PC-3 (cell line): ENCODE measurements at regions of chr2 and their contacts with region 1.

Region 1: DNA sequence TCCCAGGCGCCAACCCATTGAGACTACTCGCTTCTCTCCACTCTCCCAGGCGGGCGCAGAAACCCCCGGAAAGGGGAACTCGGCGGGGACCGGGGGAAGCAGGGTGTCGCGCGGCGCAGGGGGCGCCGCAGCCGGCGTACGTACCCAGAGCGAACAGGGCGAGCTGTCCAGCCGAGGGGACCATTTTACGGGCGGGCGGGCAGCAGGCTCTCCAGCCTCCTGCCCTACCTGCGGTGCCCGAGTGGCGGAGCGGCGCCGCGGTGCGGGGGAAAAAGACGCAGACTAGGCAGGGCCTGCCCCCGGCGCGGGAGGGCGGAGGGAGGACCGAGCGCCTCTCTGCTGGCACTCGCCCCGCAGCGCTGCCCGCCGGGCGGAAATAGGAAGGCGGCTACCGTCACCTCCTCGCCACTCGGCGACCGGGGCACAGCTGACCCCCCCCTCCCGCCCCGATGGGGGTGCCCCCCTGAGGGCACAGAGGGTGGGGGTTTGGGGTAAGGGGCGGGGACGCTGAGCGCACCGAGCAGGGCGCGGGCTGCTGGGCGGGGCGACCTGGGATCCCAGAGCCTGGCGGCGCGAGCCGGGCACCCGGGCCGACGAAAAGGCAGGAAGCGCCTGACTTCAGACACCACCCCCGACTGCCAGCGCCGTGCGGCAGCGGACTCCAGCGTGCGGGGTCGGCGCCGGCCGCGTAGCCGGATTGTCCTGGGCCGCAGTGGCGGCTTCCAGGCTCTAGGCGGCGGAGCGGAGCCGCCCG is at the start of gene TGFA:
- DNase-seq: peak; percentile 95
- ATAC-seq: peak; percentile 79
- H3K4me3 ChIP-seq: peak within 1 kb of the TSS; percentile 96
- H3K27ac ChIP-seq: peak within 1 kb of the TSS; percentile 87
- H3K4me1 ChIP-seq: peaks cover 39% of the 10 kb centered on the region
- H3K27me3 ChIP-seq: no peaks in the 10 kb centered on the region
- CTCF ChIP-seq: peak; percentile 78
- total RNA-seq, gene TGFA: 45.0 and 54.7 TPM in 2 replicates

Region 2: DNA sequence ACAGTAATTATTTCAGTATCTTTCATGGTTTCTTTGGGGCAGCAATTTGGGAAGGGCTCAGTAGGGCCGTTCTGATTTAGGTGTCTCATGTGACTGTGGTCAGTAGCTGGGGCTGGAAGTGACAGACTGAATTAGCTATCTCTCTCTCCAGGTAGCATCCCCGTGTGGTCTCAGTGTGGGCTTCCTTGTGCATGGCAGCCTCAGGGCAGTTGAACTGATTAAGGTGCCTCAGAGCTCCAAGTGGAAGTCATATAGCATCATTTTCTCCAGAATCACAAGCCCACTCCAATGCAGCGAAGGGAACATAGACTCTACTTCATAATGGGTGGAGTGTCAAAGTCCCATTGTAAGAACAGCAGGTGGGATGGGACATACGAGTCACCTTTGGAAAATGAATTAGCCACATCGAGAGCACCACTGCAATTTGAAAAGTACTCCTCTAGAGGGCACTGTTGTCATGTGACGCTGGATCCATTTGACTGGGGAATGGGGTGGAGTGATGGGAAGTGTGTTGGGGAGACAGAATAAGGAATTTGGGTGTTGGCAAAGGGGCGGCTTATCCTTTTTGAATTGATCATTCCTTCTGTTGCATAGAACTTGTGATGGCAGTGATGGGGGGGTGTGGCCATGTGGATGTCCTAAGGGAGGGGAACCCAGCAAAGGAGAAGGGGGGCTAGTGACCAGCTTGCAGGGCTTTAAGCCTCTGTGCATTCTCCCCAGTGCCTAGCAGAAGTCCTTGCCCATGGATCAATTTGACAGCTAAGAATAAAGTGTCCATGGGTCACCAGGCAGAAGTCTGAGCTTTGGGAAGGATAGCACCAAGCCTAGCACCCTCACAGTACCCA is 212.6 kb before region 1 on chr2:
- CTCF ChIA-PET with region 1: no interaction called
- POLR2A ChIA-PET with region 1: no interaction called
- intact Hi-C with region 1: loop called (anchors 1 kb)
- DNase-seq: peak; percentile 88
- ATAC-seq: peak; percentile 75
- H3K4me3 ChIP-seq: no peak overlapping the region
- H3K27ac ChIP-seq: no peak overlapping the region
- H3K4me1 ChIP-seq: peaks cover 33% of the 10 kb centered on the region
- H3K27me3 ChIP-seq: no peaks in the 10 kb centered on the region
- CTCF ChIP-seq: peak; percentile 95

Region 3: DNA sequence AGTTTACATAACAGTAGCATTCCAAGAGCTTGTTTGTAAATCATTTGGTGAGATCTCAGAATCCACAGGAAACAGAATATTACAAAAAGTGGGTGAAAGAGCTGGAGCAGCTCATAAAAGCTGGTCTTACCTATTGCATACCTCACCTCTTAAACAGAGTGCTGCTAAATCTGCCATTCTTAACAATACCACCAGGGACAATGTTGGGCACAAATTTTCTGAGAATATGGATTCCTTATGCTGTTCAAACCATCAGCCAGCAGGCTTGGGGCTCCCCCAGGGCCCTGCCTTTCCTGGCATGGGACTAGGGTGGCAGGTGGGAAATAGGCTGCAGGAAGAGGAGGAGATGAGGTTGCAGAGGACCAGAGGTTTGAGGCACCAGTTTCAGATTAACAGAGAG is 55.7 kb before region 1 on chr2:
- CTCF ChIA-PET with region 1: no interaction called
- POLR2A ChIA-PET with region 1: no interaction called
- intact Hi-C with region 1: loop called (anchors 5 kb)
- DNase-seq: peak; percentile 82
- ATAC-seq: peak; percentile 90
- H3K4me3 ChIP-seq: no peak overlapping the region
- H3K27ac ChIP-seq: no peak overlapping the region
- H3K4me1 ChIP-seq: peaks cover 31% of the 10 kb centered on the region
- H3K27me3 ChIP-seq: no peaks in the 10 kb centered on the region
- CTCF ChIP-seq: peak; percentile 64

Region 4: DNA sequence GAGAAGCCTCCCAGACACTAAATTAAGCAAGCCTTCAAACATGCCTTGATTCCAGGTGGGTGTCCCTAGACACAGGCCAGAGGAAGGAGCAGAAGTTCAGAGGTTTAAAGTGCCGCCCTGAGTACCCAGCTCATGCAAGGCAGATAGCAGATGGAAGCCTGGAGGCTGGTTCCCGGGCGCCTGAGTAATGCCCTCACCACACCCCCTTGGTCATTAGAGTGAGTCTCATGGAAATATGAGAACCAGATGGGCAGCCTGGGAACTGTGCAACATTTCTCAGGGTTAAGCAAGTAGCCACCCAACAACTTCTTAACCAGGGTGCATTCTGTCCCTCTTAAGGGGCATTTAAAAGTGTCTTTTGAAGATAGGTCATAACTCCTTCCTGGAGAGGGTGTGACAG is 44.2 kb before region 1 on chr2:
- CTCF ChIA-PET with region 1: no interaction called
- POLR2A ChIA-PET with region 1: no interaction called
- intact Hi-C with region 1: no loop called
- DNase-seq: peak; percentile 66
- ATAC-seq: peak; percentile 37
- H3K4me3 ChIP-seq: peak overlapping the region; percentile 27; the same call in 1 of the 2 replicates
- H3K27ac ChIP-seq: peak overlapping the region; percentile 91
- H3K4me1 ChIP-seq: peaks cover 40% of the 10 kb centered on the region
- H3K27me3 ChIP-seq: no peaks in the 10 kb centered on the region
- CTCF ChIP-seq: no peak

Region 5: GRCh38 chr2:70523996-70524965 is 29.5 kb before region 1 on chr2:
- CTCF ChIA-PET with region 1: no interaction called
- POLR2A ChIA-PET with region 1: interaction called, 3 read pairs
- intact Hi-C with region 1: loop called (anchors 1 kb)
- DNase-seq: peak; percentile 99
- ATAC-seq: peak; percentile 76
- H3K4me3 ChIP-seq: peak overlapping the region; percentile 55
- H3K27ac ChIP-seq: peak overlapping the region; percentile 99
- H3K4me1 ChIP-seq: peaks cover 67% of the 10 kb centered on the region
- H3K27me3 ChIP-seq: no peaks in the 10 kb centered on the region
- CTCF ChIP-seq: no peak

Region 6: DNA sequence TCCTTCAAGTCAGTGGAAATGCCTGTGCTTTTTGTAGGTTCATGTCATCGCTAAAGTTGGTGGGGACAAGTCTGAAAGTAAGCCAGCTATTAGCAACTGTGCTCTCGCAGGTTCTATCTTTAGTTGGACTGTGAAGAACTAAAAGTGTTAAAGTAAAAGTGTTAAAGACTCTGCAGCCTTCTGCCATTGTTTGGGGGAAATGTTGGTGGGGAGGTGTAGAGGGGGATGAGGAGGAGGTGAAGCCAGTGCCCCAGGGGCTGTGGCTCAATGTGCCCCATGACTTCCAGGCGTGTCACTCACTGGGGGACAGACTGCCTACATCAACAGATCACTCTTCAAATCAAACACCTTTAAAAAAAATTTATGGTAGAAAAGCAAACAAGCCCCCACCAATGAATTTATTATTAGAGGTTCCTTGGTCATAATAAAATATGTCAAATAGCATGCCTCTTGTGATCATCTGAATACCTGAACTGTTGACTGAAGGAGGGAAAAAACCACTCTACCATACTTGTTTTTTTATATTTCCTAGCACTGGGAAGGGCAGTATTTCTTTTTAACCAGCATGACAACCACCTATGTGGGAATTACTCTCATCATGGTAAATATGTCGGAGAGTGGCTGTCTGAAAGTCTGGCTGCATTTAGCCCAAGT is 19.5 kb before region 1 on chr2:
- CTCF ChIA-PET with region 1: interaction called, 4 read pairs
- POLR2A ChIA-PET with region 1: no interaction called
- intact Hi-C with region 1: loop called (anchors 2 kb)
- DNase-seq: peak; percentile 68
- ATAC-seq: peak; percentile 80
- H3K4me3 ChIP-seq: 0 out of 2 replicates have a peak overlapping the region, but pooled peaks have one; percentile 2
- H3K27ac ChIP-seq: peak overlapping the region; percentile 71
- H3K4me1 ChIP-seq: peaks cover 61% of the 10 kb centered on the region
- H3K27me3 ChIP-seq: no peaks in the 10 kb centered on the region
- CTCF ChIP-seq: no peak

Region 7: DNA sequence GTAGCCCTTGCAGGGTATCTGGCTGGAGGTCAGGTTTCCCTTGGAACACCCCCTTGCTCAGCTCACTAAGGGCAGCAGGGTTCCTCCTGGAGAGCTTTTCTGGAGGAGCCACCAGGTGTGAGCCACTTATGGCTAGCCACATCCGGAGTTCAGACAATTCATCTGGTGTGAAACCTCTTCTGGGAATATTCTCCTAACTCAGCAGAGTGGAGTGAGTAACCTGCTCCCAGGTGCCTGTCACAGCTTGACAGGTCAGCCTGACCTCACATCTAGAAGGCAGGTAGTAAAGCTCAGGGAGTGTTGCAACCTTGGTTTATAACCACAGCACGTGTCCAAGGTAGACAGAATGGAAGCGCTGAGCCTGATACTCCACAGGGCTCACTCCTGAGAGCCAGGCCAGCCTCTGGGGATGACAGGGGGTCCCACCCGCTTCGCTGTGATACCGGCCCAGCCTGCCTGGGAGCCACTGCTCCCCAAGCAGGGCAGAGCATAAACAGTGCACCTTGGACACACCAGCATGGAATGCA is 62.5 kb after region 1 on chr2:
- CTCF ChIA-PET with region 1: interaction called, 9 read pairs
- POLR2A ChIA-PET with region 1: no interaction called
- intact Hi-C with region 1: loop called (anchors 1 kb)
- DNase-seq: peak; percentile 86
- ATAC-seq: peak; percentile 70
- H3K4me3 ChIP-seq: no peak overlapping the region
- H3K27ac ChIP-seq: 0 out of 2 replicates have a peak overlapping the region, but pooled peaks have one; percentile 4
- H3K4me1 ChIP-seq: peaks cover 20% of the 10 kb centered on the region
- H3K27me3 ChIP-seq: no peaks in the 10 kb centered on the region
- CTCF ChIP-seq: no peak

Region 8: DNA sequence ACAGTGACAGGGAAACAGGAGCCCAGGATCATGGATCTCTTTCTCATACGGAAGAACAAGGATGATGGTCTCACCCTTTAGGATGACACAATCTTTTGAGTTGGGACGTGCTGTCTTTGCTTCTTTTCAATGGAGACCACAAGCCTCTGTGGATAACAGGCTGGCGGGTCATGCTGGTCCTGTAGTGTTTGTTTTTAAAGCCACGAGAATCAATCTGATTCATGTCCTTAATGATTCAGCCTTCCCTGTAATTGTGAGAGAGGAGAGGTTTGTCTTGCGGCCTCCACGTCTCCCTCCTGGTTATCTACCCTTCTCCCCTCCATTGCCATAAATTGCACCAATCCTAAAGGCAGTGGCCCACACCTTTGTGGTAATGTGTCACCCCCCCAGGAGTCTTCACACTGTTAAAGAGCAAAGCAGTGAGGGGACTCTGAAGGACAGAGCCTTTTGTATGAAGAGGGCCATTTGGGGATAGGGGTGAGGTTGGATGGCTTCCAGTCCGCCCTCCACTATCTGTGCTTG is 87.6 kb after region 1 on chr2:
- CTCF ChIA-PET with region 1: no interaction called
- POLR2A ChIA-PET with region 1: no interaction called
- intact Hi-C with region 1: no loop called
- DNase-seq: peak; percentile 56
- ATAC-seq: peak; percentile 76
- H3K4me3 ChIP-seq: no peak overlapping the region
- H3K27ac ChIP-seq: no peak overlapping the region
- H3K4me1 ChIP-seq: peaks cover 16% of the 10 kb centered on the region
- H3K27me3 ChIP-seq: no peaks in the 10 kb centered on the region
- CTCF ChIP-seq: no peak

Region 9: GRCh38 chr2:70748002-70748784 is 194.4 kb after region 1 on chr2:
- CTCF ChIA-PET with region 1: no interaction called
- POLR2A ChIA-PET with region 1: no interaction called
- intact Hi-C with region 1: no loop called
- DNase-seq: no peak
- ATAC-seq: no peak; the same call in 1 of the 2 replicates
- H3K4me3 ChIP-seq: no peak overlapping the region
- H3K27ac ChIP-seq: no peak overlapping the region
- H3K4me1 ChIP-seq: no peaks in the 10 kb centered on the region
- H3K27me3 ChIP-seq: peaks cover 47% of the 10 kb centered on the region
- CTCF ChIP-seq: peak; percentile 22; the same call in 1 of the 2 replicates

Region 10: DNA sequence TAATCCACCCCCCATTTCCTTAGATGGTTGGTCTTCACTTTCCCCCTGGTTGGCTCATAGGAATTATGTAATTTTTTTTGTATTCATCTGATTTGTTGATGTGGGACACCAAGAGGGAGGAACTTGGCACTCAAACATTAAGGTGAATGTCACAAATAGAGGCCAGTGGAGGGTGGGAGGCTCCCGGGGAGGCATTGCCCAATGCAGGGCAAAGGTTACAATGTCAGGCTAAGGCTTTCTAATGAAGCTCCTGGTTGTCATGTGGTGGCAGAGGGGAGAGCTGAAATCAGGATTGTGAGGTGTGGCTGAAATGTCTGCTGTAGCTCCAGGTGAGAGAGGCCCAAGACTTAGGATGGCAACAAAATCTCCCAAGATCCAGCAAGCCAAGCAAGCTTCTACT is 619.3 kb after region 1 on chr2:
- CTCF ChIA-PET with region 1: no interaction called
- POLR2A ChIA-PET with region 1: no interaction called
- intact Hi-C with region 1: no loop called
- DNase-seq: no peak
- ATAC-seq: no peak
- H3K4me3 ChIP-seq: no peak overlapping the region
- H3K27ac ChIP-seq: no peak overlapping the region
- H3K4me1 ChIP-seq: no peaks in the 10 kb centered on the region
- H3K27me3 ChIP-seq: no peaks in the 10 kb centered on the region
- CTCF ChIP-seq: no peak